BJ (cell line): ENCODE measurements at regions of chr19 and their contacts with region 1.

Region 1: GRCh38 chr19:10251792-10252694 is at the start of gene MRPL4:
- DNase-seq: peak; percentile 92
- H3K4me3 ChIP-seq: peak within 1 kb of the TSS; percentile 97
- H3K27me3 ChIP-seq: no peaks in the 10 kb centered on the region
- CTCF ChIP-seq: no peak
- polyA plus RNA-seq, gene MRPL4: 35.4 and 58.7 TPM in 2 replicates

Region 2: DNA sequence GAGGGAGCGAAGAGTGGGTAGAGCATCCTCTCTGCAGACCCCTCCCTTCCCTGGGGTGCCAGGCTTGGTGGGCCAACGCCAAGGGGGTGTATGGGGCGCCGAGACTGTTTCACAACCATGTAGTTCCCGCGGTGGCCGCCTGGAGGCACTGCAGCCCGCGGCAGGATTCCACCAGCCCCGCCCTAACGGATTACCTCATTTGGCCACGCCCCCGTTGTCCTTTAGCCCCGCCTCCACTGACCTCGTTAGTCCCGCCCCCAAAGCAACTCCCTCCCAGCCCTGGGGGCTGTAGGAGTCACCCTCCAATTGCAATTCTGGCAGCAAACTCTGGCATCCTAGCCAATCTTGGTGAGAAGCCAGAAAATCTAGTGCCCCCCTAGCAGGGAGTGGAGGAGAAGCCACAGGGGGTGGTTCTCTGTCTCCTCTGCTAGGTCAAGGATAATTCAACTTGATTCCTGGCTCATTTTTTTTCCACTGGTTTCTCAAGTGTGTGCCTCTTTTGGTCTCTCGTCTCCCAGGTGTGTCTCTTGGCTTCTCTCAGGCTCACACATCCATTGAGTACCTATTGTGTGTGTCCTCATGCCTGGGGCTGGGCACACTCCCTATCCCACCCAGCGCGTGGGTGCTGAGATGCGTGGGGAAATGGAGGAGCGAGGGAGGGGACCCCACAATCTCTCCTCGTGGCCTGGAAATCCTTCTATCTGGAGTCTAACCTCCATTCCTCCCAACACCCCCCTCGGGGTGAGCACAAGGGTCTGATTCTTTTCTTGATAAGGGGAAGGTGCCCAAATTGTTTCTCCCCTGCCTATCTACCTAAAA is 317.7 kb before region 1 on chr19:
- CTCF ChIA-PET with region 1: interaction called, 42 read pairs
- POLR2A ChIA-PET with region 1: no interaction called
- DNase-seq: no peak
- H3K4me3 ChIP-seq: no peak overlapping the region
- H3K27me3 ChIP-seq: peaks cover 18% of the 10 kb centered on the region
- CTCF ChIP-seq: peak; percentile 98

Region 3: DNA sequence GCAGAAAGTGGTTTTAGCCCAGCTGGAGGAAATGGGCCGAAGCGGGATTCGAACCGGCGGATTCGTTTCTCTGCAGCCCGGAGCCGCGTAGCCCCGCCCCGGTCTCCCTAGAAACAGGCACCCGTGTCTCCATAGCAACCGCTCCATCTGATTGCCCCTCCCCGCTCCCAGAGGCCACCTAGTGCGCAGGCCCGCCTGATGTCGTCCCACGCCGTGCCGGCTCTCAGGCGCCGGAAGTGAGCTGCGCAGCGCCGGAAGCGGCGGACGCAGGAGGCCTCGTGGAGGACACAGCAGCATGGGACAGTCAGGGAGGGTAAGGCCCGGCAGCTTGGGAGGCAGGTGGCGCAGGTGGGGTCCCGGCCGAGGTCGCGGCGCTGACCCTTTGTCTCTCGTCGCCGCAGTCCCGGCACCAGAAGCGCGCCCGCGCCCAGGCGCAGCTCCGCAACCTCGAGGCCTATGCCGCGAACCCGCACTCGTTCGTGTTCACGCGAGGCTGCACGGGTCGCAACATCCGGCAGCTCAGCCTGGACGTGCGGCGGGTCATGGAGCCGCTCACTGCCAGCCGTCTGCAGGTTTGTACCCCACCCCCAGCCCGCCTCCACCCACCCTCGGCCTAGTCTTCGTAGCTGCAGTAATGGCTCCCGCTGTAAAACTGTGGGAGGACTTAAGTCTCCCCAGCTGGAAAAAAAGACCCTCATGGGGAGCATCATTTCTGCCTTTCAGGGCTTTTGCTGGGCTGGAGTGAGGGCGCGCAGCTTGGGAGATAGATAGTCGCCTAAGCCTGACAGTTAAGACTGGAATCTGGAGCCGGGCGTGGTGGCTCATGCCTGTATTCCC is 145.7 kb before region 1 on chr19 and contains the start of gene PPAN:
- CTCF ChIA-PET with region 1: interaction called, 18 read pairs
- POLR2A ChIA-PET with region 1: no interaction called
- DNase-seq: peak; percentile 74
- H3K4me3 ChIP-seq: peak within 1 kb of the TSS; percentile 95
- H3K27me3 ChIP-seq: no peaks in the 10 kb centered on the region
- CTCF ChIP-seq: no peak
- polyA plus RNA-seq, gene PPAN: 16.9 and 18.1 TPM in 2 replicates

Region 4: GRCh38 chr19:10182076-10182475 is 70.0 kb before region 1 on chr19:
- CTCF ChIA-PET with region 1: interaction called, 10 read pairs
- POLR2A ChIA-PET with region 1: no interaction called
- DNase-seq: no peak
- H3K4me3 ChIP-seq: no peak overlapping the region
- H3K27me3 ChIP-seq: no peaks in the 10 kb centered on the region
- CTCF ChIP-seq: no peak

Region 5: DNA sequence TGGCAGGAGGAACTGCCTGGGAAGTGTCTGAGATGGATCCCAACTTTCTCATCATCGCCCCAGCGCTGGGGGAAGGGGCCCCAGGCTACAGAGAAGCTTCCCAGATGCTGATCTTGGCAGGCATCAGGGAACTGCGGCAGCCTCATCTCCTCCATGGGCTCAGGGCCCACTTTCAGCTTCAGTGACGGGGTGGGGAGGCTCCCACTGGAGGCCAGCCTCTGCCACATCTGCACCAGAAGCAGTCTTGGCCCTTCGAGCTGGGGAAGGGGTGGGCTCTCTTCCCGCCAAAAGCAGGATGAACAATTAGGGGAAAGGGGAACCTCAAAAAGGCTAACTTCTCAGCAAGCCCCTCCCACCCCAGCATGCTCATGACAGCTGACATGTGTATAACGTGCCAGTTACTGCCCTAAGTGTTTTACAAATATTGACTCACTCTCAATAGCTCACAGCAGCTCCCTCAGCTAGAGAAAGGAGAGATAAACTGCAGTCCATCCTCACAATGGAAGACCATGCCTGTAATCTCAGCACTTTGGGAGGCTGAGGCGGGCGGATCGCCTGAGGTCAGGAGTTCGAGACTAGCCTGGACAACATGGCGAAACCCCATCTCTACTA is 13.8 kb before region 1 on chr19:
- CTCF ChIA-PET with region 1: interaction called, 22 read pairs
- POLR2A ChIA-PET with region 1: no interaction called
- DNase-seq: no peak
- H3K4me3 ChIP-seq: no peak overlapping the region
- H3K27me3 ChIP-seq: no peaks in the 10 kb centered on the region
- CTCF ChIP-seq: no peak